ENCODE measurements at regions of chr16 and their contacts with region 1.

Region 1: GRCh38 chr16:85114909-85115567 is 2.8 kb upstream of the CIBAR2 start:
- DNase-seq: peak; percentile 88
- ATAC-seq: peak; percentile 88 to 91

Region 2: GRCh38 chr16:84647828-84648594 is 467.0 kb before region 1 on chr16 and contains the start of gene KLHL36:
- intact Hi-C with region 1: no loop called
- DNase-seq: peak; percentile 66
- ATAC-seq: peak; percentile 83 to 90
- total RNA-seq, gene KLHL36: 35.8 to 47.0 TPM

Region 3: DNA sequence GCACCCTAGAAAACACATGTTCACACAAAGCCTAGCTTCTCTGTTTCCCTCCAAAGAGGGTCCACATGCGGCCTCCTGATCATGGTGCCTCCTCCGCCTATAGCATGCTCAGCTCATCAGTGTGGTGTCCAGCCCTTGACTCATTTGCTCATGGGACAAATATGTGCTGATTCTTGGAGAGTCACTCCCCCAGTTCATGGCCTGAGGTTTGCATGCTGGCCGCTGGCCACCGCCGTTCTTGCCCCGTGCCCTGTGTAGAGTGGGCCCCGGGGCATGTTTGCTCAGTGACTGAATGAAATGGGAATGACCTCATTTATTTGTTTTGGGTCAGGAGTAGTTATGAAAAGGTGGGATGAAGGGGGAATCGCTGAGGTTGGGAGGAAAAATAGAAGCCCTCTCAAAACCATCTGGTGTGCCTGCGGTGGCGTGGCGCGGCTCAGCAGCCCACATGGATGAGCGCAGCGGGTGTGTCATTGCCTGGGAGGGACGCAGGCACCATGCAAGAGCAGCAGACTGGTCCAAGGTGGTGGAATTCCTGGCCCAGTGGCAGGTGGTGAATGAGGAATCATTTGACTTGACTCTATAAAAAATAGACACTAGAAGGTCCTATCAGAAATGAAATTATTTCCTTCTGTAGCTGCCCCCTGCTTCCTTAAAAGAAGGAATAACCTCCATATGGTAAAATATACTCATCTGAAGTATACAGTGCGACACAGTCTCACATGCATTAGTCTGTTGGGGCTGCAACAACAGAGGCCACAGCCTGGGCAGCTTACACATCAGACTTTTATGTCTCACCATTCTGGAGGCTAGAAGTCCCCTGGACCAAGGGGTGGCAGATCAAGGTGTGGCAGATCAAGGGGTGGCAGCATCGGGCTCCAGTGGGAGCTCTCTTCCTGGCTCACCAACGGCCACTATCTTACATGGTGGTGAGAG is 263.6 kb before region 1 on chr16:
- intact Hi-C with region 1: no loop called
- DNase-seq: no peak
- ATAC-seq: peak in 1 of 2 donors; percentile 55

Region 4: GRCh38 chr16:85010931-85011845 is 103.8 kb before region 1 on chr16 and contains the start of gene ZDHHC7:
- intact Hi-C with region 1: no loop called
- DNase-seq: peak; percentile 93
- ATAC-seq: peak; percentile 97
- total RNA-seq, gene ZDHHC7: 33.2 to 35.2 TPM

Region 5: DNA sequence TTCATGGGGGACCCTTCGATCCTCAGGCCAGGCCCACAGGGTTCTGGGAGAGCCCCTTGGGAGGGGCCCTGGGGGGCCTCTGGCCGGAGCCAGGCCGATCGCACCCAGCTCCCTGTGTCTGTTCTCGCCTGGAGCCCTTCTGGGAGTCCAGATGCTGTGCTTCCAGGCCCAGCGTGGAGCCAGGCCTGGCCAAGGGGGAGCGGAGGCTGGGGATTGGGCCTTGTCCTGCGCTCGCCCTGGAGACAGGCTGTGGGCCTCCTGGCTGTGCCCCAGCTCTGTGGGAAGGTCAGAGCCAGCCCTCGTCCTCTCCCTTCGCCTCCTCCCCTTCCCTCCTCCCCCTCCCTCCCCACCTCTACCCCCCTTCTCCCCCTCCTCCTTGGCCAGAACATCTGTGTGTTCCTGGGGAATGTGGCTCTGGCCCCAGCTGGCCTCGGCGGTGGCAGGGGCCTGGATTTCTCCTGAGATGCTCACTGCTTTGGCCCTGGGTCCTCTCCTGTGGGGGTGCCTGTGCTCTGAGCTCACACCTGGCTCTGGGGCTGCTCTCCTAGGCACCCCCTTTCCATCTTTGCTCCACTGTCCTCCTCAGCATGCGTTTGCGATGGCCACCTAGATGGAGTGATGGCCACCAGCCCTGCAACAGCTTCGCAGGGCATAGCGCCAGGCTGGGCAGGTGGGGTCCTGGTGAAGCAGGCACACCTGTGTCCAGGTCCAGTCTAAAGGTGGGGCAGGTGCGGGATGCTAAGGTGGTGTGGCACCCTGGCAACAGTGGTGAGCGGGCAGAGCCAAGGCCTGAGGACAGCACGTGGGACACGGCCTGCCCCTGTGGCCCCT is 87.8 kb after region 1 on chr16:
- intact Hi-C with region 1: no loop called
- DNase-seq: peak; percentile 85
- ATAC-seq: peak; percentile 83 to 86

Region 6: DNA sequence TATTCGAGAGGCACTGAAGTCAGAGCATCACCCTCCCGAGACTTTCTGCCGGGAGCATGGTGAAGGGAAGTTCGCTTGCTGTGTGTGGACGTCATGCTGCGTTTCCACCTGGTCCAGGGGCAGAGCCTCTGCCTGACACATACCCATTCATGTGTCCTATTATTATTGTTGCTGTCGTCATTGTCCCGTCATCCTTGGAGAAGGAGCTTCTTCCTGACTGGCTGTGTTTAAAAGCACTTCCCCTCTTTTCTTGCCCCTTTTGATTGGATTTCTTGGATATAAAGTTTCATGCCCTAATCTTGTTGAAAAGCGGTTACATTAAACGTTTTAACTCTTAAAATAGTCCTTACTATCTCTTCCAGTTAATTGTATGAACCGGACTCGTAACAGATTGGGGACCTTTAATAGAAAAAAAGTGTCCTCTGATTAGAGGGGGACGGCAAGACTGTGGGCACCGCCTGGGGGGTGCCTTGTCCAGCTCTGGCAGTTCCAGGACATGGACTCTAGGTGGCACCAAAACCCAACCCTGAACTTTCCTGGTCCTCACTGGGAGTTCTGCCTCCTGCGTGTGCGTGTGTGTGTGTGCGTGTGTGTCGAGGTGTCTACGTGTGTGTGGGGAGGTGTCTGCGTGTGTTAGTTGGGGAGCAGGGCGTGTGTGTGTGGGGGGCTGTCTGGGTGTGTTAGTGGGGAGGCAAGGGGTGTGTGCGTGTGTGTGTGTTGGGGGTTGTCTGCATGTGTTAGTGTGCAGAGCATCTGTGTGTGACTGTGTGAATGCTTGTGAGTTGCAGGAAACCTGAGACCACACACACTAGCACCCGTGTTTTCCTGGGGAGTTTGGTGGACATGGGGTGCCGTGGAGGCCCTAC is 130.5 kb after region 1 on chr16:
- intact Hi-C with region 1: loop called (anchors 5 to 10 kb)
- DNase-seq: peak; percentile 71
- ATAC-seq: peak; percentile 42 to 65

Region 7: GRCh38 chr16:85253084-85253941 is 138.3 kb after region 1 on chr16:
- intact Hi-C with region 1: loop called (anchors 5 to 10 kb)
- DNase-seq: peak; percentile 53
- ATAC-seq: peak; percentile 70 to 71